ENCODE measurements at regions of chr19 and their contacts with region 1.

Region 1: DNA sequence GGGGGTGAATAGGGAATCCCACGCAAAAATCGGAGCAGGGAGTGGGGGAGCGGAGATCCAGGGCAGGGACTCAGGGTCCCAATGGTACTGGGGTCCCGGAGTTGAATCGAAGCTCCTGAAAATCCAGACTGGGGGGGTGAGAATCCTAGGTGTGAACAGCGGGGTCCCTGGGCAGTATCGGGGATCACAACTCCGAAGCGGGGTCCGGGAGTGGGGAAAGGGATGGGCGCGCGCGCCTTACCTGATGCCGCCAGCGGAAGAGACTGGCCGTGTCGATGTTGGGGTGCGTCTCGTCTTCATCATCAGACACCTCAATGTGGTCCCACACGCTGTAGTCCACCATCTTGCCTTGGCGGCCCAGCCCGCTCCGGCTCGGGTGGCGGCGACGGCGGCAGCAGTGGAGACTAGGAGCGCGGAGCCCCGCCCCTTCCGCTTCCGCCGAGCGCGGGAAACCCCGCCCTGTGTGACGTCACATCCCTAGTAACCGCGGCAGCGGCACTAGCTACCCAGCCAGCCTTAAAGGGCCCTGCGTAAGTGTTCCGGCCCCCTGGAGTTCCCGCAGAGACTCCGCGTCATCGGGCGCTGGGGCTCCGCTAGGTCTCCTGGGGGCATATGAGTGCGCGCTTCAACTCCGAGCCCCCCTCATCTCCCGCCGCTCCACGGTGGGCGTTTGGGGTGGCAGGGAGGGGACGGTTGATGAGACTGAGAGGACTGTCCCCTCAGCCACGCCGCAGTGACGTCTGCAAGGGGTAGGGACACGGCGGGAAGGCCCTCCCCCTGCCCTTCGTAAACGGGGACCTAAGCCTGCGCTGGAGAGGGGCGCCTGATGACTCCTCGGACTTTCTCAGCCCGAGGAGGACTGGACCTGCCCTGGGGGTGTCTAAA is at the start of gene CDC37:
- DNase-seq: peak; percentile 97
- H3K4me3 Mint-ChIP-seq: peak within 1 kb of the TSS; percentile 99
- H3K27ac Mint-ChIP-seq: peak within 1 kb of the TSS; percentile 98
- H3K4me1 Mint-ChIP-seq: peaks cover 5% of the 10 kb centered on the region
- H3K27me3 Mint-ChIP-seq: peaks cover 11% of the 10 kb centered on the region
- CTCF ChIP-seq: no peak
- total RNA-seq, gene CDC37: 164 and 188 TPM in 2 replicates

Region 2: GRCh38 chr19:9757544-9758501 is 645.6 kb before region 1 on chr19:
- CTCF ChIA-PET with region 1: no interaction called
- POLR2A ChIA-PET with region 1: no interaction called
- intact Hi-C with region 1: no loop called
- DNase-seq: no peak
- H3K4me3 Mint-ChIP-seq: no peak overlapping the region
- H3K27ac Mint-ChIP-seq: no peak overlapping the region
- H3K4me1 Mint-ChIP-seq: no peaks in the 10 kb centered on the region
- H3K27me3 Mint-ChIP-seq: no peaks in the 10 kb centered on the region
- CTCF ChIP-seq: no peak

Region 3: GRCh38 chr19:10380313-10381102 is 22.9 kb before region 1 on chr19 and contains the start of gene TYK2:
- CTCF ChIA-PET with region 1: interaction called, 4 read pairs
- POLR2A ChIA-PET with region 1: interaction called, 10 read pairs
- intact Hi-C with region 1: no loop called
- DNase-seq: peak; percentile 100
- H3K4me3 Mint-ChIP-seq: peak within 1 kb of the TSS; percentile 89
- H3K27ac Mint-ChIP-seq: peak within 1 kb of the TSS; percentile 80
- H3K4me1 Mint-ChIP-seq: peaks cover 6% of the 10 kb centered on the region
- H3K27me3 Mint-ChIP-seq: no peaks in the 10 kb centered on the region
- CTCF ChIP-seq: no peak
- total RNA-seq, gene TYK2: 75.0 and 83.7 TPM in 2 replicates

Region 4: GRCh38 chr19:10388957-10389356 is 14.4 kb before region 1 on chr19:
- CTCF ChIA-PET with region 1: interaction called, 25 read pairs
- POLR2A ChIA-PET with region 1: interaction called, 8 read pairs
- intact Hi-C with region 1: no loop called
- DNase-seq: peak; percentile 89
- H3K4me3 Mint-ChIP-seq: no peak overlapping the region
- H3K27ac Mint-ChIP-seq: no peak overlapping the region
- H3K4me1 Mint-ChIP-seq: peaks cover 5% of the 10 kb centered on the region
- H3K27me3 Mint-ChIP-seq: no peaks in the 10 kb centered on the region
- CTCF ChIP-seq: peak; percentile 89

Region 5: DNA sequence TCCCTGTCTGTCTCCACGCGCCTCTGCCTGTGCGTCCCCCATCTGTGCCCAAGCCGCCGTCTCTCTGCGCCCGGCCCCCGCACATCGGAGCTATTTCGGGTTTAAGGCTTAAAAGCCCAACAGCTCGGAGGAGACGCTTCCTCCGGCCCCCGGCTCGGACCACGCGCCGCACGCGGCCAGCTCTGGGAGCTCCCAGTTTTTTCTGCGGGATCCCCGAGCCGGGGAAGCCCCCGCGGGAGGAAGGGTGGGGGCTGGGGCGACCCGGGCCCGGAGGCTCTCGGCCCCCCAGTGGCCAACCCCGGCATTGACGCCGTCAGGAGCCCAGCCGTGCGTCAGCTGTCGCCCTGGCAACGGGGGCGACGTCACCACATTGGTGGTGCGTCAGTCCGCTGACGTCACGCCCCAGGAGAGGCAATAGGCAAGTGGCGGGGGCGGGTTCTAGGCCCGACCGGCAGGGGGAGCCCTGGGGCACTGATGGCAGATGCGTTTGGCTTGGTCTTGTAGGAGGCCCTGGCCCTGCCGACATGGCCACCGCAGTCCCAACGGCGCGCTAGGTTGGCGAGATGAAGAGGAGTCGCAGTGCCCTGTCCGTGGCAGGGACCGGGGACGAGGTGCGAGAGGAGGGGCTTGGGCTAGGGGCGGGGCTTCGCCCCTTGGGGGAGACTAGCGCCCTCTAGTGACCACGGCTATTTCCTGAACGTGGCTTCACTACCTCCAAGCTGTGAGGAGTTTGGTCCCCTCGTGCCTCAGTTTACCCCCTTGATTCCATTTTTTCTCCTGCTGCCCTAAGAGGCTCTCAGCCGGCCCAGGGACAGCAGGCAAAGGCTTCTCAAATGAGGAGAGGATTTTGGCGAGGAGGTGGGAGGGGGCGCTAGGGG is 13.2 kb after region 1 on chr19:
- CTCF ChIA-PET with region 1: interaction called, 74 read pairs
- POLR2A ChIA-PET with region 1: interaction called, 5 read pairs
- intact Hi-C with region 1: no loop called
- DNase-seq: peak; percentile 54
- H3K4me3 Mint-ChIP-seq: peak overlapping the region; percentile 55
- H3K27ac Mint-ChIP-seq: no peak overlapping the region
- H3K4me1 Mint-ChIP-seq: peaks cover 25% of the 10 kb centered on the region
- H3K27me3 Mint-ChIP-seq: peaks cover 33% of the 10 kb centered on the region
- CTCF ChIP-seq: peak; percentile 80

Region 6: DNA sequence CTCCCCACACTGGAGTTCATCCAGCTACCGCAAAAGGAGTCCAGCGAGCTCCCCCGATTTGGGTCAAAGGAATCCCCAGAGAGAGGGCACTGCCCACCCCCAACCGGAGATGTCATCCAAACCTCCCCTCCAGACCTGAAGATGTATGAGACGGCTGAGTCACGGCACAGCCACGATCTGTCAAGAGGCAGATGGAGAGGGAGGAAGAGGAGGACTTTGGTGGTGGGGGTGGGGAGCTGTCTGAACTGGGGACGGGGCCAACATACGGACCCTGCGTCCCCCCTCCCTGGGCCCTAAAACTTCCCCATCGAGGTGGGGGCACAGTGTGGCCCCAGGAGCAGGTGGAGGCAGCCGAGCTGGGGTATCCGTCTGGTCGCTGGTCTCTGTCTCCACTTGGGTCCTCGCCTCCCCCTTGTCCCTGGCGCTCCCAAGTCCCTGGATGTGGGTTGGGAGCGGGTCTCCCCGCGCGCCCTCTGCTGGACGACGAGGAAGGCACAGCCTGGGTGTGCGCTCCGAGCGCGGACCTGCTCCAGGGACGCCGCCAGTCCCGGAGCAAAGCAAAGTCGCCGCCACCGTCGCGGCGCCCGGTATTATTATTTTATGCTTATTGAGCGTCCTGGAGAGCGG is 20.7 kb after region 1 on chr19:
- CTCF ChIA-PET with region 1: interaction called, 34 read pairs
- POLR2A ChIA-PET with region 1: interaction called, 5 read pairs
- intact Hi-C with region 1: loop called (anchors 2 kb)
- DNase-seq: peak; percentile 82
- H3K4me3 Mint-ChIP-seq: peak overlapping the region; percentile 53
- H3K27ac Mint-ChIP-seq: no peak overlapping the region
- H3K4me1 Mint-ChIP-seq: peaks cover 9% of the 10 kb centered on the region
- H3K27me3 Mint-ChIP-seq: peaks cover 44% of the 10 kb centered on the region
- CTCF ChIP-seq: peak; percentile 81

Region 7: DNA sequence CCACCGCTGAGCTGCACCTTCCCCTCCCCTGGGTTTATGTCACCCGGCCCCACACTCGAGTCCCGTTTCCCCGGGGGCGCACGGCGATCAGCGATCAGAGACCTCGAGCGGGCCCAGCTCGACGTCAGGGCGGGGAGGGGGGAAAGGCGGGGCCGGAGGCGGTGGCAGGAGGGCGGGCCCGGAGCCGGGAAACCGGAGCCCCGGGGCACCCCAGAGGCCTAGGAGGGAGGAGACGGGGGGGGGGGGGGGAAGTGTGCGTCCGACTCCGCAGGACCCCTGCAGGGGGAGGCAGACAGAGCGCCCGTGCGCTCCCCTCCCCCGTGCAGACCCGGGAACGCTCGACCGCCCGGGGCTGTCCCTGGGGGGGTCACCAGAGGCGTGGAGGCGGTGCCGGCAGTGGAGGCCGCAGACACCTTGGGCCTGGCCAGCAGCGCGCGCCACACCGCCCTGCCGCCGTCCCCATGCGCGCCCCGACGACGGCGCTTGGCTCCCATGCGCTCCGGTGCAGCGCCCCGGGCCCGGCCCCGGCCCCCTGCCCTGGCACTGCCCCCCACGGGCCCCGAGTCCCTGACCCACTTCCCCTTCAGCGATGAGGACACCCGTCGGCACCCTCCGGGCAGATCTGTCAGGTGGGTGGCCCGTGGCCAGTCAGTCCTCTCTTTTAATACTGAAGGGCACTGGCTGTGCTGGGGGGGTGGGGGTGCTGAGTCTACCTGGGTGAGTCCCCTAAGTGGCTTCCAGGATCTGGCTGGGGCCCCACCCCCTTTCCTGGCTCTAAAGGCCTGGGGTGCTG is 28.8 kb after region 1 on chr19:
- CTCF ChIA-PET with region 1: interaction called, 11 read pairs
- POLR2A ChIA-PET with region 1: interaction called, 3 read pairs
- intact Hi-C with region 1: no loop called
- DNase-seq: no peak
- H3K4me3 Mint-ChIP-seq: peak overlapping the region; percentile 40
- H3K27ac Mint-ChIP-seq: no peak overlapping the region
- H3K4me1 Mint-ChIP-seq: peaks cover 5% of the 10 kb centered on the region
- H3K27me3 Mint-ChIP-seq: peaks cover 34% of the 10 kb centered on the region
- CTCF ChIP-seq: no peak

Region 8: DNA sequence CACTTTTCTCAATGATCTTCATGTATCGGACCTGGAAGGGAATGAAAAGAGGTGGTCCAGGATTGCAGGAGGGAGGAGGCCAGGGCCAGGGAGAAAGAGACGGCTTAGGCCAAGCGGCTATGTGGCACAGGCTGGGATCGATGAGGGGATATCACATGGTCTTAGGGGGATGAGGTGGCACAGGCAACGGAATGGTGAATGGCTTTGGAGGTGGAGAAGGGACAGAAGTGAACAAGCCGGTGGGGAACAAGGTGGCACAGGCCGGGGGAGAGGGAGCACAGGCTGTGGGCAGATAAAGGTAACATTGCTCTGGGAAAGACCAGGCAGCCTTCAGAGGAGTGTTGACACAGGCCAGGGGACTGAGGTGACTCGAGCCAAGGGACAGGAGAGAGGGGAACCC is 171.1 kb after region 1 on chr19:
- CTCF ChIA-PET with region 1: interaction called, 4 read pairs
- POLR2A ChIA-PET with region 1: no interaction called
- intact Hi-C with region 1: loop called (anchors 5 kb)
- DNase-seq: no peak
- H3K4me3 Mint-ChIP-seq: no peak overlapping the region
- H3K27ac Mint-ChIP-seq: no peak overlapping the region
- H3K4me1 Mint-ChIP-seq: peaks cover 1% of the 10 kb centered on the region
- H3K27me3 Mint-ChIP-seq: no peaks in the 10 kb centered on the region
- CTCF ChIP-seq: no peak

Measured in MCF 10A (cell line).